MCF 10A (cell line): ENCODE measurements at regions of chr9 and their contacts with region 1.

Region 1: GRCh38 chr9:137200311-137201204 is at the start of gene TPRN:
- DNase-seq: peak; percentile 100
- H3K4me3 Mint-ChIP-seq: peak within 1 kb of the TSS; percentile 76
- H3K27ac Mint-ChIP-seq: no peak within 1 kb of the TSS
- H3K4me1 Mint-ChIP-seq: peaks cover 12% of the 10 kb centered on the region
- H3K27me3 Mint-ChIP-seq: no peaks in the 10 kb centered on the region
- CTCF ChIP-seq: no peak
- total RNA-seq, gene TPRN: 12.6 and 13.4 TPM in 2 replicates

Region 2: DNA sequence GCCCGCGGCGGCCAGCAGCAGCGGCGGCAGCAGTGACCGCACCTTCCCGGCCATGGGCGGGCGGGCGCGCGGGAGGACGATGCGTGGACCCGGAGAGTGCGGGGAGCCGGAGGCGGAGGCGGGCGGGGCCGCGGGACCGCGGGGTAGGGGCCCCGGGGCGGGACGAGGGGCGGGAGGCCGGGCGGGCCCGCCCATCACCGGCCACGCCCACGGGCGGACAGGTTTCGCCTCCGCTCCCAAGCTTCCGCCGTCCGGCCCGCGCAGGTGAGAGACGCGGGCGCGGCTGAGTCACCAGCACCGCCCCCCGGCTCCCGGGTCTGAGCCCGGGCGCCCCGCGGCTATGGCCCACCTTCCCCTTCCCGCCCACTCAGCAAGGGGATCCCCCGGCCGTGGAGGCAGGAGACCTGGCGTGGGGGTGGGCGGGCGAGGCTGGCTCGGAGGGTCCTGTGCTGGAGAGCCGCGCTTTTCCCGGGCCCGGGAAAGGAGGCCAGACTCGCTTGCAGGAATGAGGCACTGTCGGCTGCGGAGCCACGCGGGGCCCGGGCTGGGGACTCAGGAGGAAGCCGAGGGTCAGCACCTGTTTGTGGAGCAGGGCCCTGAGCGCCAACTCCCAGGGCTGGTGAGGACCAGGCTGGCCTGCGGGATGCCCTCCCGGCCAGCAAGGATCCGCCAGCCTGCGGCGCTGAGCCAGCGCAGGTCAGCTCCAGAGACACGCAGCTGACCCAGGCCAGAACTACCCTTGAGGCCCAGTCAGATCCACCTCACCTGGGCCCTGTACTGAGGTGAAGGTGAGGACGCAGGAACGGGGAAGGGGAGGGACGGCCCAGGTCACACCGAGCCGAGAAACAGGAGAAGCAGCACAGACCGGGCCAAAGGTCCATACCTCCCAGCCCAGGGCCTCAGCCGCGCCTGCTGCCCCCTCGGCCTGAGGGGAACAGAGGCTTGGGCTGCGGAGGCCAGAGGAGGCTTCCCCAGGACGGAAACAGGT is 146.3 kb before region 1 on chr9 and contains the start of gene ENTPD2:
- CTCF ChIA-PET with region 1: no interaction called
- POLR2A ChIA-PET with region 1: no interaction called
- intact Hi-C with region 1: no loop called
- DNase-seq: peak; percentile 82
- H3K4me3 Mint-ChIP-seq: peak within 1 kb of the TSS; percentile 61
- H3K27ac Mint-ChIP-seq: no peak within 1 kb of the TSS
- H3K4me1 Mint-ChIP-seq: peaks cover 7% of the 10 kb centered on the region
- H3K27me3 Mint-ChIP-seq: no peaks in the 10 kb centered on the region
- CTCF ChIP-seq: no peak
- total RNA-seq, gene ENTPD2: 13.4 and 31.5 TPM in 2 replicates

Region 3: DNA sequence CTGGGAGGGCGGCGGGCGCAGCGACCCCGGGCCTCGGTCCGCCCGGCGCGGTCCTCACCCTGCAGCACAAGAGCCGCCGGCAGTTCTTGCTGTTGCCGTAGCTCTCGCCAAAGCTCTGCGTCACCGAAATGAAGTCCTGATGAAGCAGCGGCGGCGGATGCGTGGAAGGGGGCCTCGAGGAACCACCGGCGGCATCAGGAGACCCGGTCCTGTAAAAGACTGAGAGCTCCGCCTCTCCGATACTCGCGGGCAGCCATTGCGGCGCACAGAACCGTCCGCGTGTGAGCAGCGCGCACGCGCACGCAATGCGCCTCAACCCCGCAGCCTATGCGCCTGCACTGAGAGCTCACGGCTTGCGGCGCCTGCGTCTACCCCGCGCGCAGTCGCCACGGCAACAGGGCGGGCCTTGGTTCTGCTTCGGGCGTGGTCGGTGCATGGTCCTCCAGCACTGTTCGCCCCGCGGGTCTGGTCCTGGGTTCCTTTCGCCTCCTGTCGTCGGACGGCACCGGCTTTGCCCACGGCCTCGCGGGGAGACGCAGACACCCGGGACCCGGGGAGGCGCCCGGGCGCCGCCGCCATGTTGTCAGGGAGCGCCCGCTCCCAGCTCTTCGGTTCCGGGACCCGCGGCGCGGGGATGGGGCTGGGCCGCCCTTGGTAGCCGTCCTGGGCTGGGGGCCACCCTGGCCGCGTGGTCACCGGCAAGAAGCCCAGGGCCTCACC is 70.9 kb before region 1 on chr9:
- CTCF ChIA-PET with region 1: interaction called, 7 read pairs
- POLR2A ChIA-PET with region 1: interaction called, 22 read pairs
- intact Hi-C with region 1: no loop called
- DNase-seq: peak; percentile 91
- H3K4me3 Mint-ChIP-seq: peak overlapping the region; percentile 77
- H3K27ac Mint-ChIP-seq: no peak overlapping the region
- H3K4me1 Mint-ChIP-seq: peaks cover 18% of the 10 kb centered on the region
- H3K27me3 Mint-ChIP-seq: no peaks in the 10 kb centered on the region
- CTCF ChIP-seq: no peak

Region 4: GRCh38 chr9:137217276-137218211 is 17.0 kb after region 1 on chr9:
- CTCF ChIA-PET with region 1: interaction called, 6 read pairs
- POLR2A ChIA-PET with region 1: interaction called, 73 read pairs
- intact Hi-C with region 1: no loop called
- DNase-seq: peak; percentile 74
- H3K4me3 Mint-ChIP-seq: peak overlapping the region; percentile 70
- H3K27ac Mint-ChIP-seq: peak overlapping the region; percentile 60
- H3K4me1 Mint-ChIP-seq: peaks cover 5% of the 10 kb centered on the region
- H3K27me3 Mint-ChIP-seq: no peaks in the 10 kb centered on the region
- CTCF ChIP-seq: no peak